MCF 10A (cell line): ENCODE measurements at regions of chr17 and their contacts with region 1.

Region 1: DNA sequence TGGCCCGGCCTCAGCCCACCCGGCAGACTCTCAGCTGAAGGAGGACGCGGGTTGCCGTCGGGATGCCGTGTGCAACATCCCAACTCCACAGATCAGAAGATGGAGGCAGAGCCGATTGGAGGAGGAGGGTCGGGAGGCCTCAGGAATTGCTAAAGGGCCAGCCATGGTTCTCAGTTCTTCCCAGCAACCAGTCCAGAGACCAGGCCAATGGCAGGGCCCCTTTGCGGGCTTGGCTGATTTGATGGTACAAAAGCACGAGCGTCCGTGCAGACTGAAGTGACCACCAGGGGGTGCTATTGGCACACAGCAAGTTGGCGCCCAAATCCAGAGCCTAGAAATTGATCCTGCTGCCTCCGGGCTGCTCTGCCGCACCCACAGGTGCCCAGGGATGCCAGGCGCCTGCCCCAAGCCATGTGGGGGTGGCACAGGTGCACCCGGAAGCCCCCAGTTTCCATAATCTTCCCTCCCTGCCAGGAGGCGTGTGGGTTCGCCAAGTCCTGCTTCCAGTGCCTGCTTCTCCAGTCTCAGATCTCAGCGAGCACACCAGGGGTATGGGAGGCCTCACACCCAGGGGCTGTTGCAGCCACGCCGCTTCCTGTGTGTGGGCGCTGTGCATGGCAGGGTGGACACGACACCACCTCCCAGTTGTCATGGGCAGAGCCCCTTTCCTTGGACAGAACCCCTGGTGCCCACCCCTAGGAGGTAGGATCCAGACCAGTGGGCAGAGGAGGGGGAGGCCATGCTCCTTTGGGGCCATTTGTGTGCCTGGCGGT is 7.1 kb upstream of the TEX19 start:
- DNase-seq: peak; percentile 86
- H3K4me3 Mint-ChIP-seq: no peak overlapping the region
- H3K27ac Mint-ChIP-seq: no peak overlapping the region
- H3K4me1 Mint-ChIP-seq: peaks cover 15% of the 10 kb centered on the region
- H3K27me3 Mint-ChIP-seq: peaks cover 11% of the 10 kb centered on the region
- CTCF ChIP-seq: peak; percentile 94

Region 2: GRCh38 chr17:81599719-81600486 is 752.0 kb before region 1 on chr17:
- CTCF ChIA-PET with region 1: no interaction called
- POLR2A ChIA-PET with region 1: no interaction called
- intact Hi-C with region 1: no loop called
- DNase-seq: no peak
- H3K4me3 Mint-ChIP-seq: no peak overlapping the region
- H3K27ac Mint-ChIP-seq: no peak overlapping the region
- H3K4me1 Mint-ChIP-seq: no peaks in the 10 kb centered on the region
- H3K27me3 Mint-ChIP-seq: no peaks in the 10 kb centered on the region
- CTCF ChIP-seq: no peak

Region 3: GRCh38 chr17:82338858-82339633 is 12.9 kb before region 1 on chr17:
- CTCF ChIA-PET with region 1: interaction called, 14 read pairs
- POLR2A ChIA-PET with region 1: interaction called, 4 read pairs
- intact Hi-C with region 1: no loop called
- DNase-seq: peak; percentile 87
- H3K4me3 Mint-ChIP-seq: peak overlapping the region; percentile 63
- H3K27ac Mint-ChIP-seq: peak overlapping the region; percentile 93
- H3K4me1 Mint-ChIP-seq: peaks cover 23% of the 10 kb centered on the region
- H3K27me3 Mint-ChIP-seq: no peaks in the 10 kb centered on the region
- CTCF ChIP-seq: no peak

Region 4: DNA sequence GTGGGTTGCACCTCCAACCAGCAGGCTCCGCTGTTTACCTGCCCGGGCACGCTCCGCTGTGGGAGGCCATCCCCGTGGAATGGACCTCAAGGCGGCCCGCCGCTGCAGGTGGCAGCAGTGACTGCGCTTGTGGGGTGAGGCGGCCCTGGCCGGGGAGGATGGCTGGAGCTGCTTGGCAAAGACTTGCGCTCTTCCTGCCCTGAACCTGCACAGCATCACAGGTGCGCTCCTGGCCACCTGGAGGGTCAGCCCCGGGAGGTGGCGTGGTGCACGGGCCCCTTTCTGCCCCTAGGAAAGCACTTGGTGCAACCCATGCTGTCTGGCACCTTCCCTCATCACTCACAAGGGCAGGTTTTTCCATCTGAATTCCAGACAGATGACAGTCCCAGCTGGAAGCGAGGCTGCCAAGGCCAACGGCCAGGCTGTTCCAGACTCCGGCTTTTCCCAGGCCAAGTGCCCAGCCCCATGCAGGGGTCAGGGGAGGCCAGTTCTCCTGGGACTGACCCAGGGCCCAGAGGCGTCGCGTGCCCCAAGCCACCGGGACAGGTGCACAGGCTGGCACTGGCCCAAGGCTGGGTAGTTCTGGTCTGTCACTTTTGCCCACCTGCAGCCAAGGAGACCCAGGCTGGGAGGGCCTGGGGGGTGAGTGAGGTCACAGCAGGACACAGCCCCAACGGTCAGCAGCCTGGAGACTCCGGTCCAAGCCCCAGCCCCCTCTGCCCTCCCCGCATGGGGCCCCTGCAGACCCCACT is 33.0 kb after region 1 on chr17:
- CTCF ChIA-PET with region 1: interaction called, 4 read pairs
- POLR2A ChIA-PET with region 1: interaction called, 11 read pairs
- intact Hi-C with region 1: no loop called
- DNase-seq: peak; percentile 73
- H3K4me3 Mint-ChIP-seq: no peak overlapping the region
- H3K27ac Mint-ChIP-seq: no peak overlapping the region
- H3K4me1 Mint-ChIP-seq: peaks cover 15% of the 10 kb centered on the region
- H3K27me3 Mint-ChIP-seq: peaks cover 30% of the 10 kb centered on the region
- CTCF ChIP-seq: peak; percentile 28

Region 5: DNA sequence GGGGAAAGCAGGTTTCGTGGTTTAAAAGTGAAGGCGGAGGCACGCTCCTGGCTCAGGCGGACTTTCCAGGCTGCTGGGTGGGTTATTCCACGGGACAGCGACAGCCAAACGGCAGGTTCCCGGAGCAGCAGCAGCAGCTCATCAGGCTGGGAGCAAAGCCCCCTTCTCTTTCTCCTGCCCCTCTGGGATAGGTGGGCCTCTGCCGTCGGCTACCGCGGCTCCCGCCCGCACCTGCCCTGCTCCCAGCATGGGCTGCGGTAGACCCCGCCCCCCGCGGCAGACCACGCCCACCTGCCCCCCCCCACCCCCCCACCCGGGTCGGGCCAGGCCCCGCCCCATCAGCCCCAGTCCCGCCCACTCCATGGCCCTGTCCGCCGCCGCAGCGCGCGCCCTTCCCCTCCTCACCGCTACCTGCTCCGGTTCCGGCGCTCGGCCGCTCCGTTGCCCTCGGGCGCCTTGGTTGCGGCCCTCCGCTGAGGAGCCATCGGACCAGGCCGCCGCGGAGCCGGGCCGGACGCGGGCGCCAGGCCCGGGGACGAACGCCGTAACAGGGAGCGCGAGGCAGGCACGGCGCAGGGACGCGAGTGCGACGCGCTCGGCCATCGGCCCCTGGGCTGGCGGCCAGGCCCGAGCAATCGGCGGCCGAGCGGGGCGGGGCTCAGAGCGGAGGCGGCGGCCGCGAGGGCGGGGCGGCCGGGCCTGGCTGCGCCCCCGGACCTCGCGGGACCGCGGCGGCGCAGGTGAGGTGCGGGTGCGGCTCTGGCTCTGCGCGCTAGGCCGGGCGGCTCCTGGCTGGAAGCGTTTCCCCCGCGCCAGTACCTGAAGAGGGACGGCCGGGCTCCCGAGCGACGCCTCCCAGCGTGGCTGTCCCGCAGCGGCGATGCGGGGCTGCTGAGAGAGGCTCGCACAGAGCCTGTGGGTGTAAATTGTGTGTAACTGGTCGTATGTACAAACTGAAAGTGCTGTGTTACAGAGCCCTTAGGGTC is 66.4 kb after region 1 on chr17 and contains the starts of genes HEXD and OGFOD3:
- CTCF ChIA-PET with region 1: interaction called, 4 read pairs
- POLR2A ChIA-PET with region 1: interaction called, 3 read pairs
- intact Hi-C with region 1: loop called (anchors 2 kb)
- DNase-seq: peak; percentile 78
- H3K4me3 Mint-ChIP-seq: peak within 1 kb of the TSS; percentile 71
- H3K27ac Mint-ChIP-seq: no peak within 1 kb of the TSS
- H3K4me1 Mint-ChIP-seq: no peaks in the 10 kb centered on the region
- H3K27me3 Mint-ChIP-seq: no peaks in the 10 kb centered on the region
- CTCF ChIP-seq: no peak
- total RNA-seq, gene HEXD: 14.8 and 16.2 TPM in 2 replicates
- total RNA-seq, gene OGFOD3: 16.5 and 21.1 TPM in 2 replicates

Region 6: GRCh38 chr17:82494236-82495055 is 142.5 kb after region 1 on chr17:
- CTCF ChIA-PET with region 1: interaction called, 5 read pairs
- POLR2A ChIA-PET with region 1: no interaction called
- intact Hi-C with region 1: loop called (anchors 1 kb)
- DNase-seq: peak; percentile 96
- H3K4me3 Mint-ChIP-seq: no peak overlapping the region
- H3K27ac Mint-ChIP-seq: peak overlapping the region; percentile 87
- H3K4me1 Mint-ChIP-seq: peaks cover 39% of the 10 kb centered on the region
- H3K27me3 Mint-ChIP-seq: no peaks in the 10 kb centered on the region
- CTCF ChIP-seq: peak; percentile 98

Region 7: GRCh38 chr17:82551779-82552457 is 200.0 kb after region 1 on chr17:
- CTCF ChIA-PET with region 1: interaction called, 9 read pairs
- POLR2A ChIA-PET with region 1: no interaction called
- intact Hi-C with region 1: loop called (anchors 1 kb)
- DNase-seq: peak; percentile 79
- H3K4me3 Mint-ChIP-seq: no peak overlapping the region
- H3K27ac Mint-ChIP-seq: peak overlapping the region; percentile 72
- H3K4me1 Mint-ChIP-seq: peaks cover 23% of the 10 kb centered on the region
- H3K27me3 Mint-ChIP-seq: no peaks in the 10 kb centered on the region
- CTCF ChIP-seq: peak; percentile 74

Region 8: DNA sequence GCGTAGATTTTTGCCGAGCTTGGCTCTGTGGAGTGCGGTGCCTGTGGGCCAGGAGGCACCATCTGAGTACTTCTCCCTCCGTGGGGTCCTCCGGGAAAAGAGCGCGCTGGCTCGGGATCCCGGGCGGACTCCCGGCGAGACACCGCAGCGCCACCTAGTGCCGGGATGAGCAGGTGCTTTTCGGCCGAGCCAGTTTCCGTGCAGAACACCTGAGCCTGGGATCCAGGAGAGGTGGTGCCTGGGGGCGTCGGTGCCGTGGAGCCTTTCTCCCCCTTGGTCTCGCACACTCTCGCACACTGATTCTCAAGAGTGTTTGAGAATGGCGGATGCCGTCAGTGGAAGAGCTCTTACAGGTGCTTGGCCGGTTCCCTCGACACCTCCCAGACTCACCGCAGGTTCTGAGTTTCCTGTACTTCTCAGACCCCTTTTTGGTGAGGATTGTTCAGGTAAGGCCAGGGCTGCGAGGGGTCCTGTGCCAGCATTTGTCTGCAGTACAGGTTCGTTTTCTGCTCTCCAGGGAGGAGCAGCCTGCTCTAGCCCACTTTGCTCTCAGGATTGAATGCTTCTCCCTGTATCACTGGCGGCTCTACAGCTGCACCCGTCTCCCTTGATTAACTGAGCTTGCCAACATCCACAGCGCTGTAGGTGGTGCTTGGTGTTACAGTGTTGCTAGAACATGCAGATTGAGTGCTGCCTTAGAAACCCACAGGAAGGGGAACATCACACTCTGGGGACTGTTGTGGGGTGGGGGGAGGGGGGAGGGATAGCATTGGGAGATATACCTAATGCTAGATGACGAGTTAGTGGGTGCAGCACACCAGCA is 423.3 kb after region 1 on chr17:
- CTCF ChIA-PET with region 1: interaction called, 3 read pairs
- POLR2A ChIA-PET with region 1: no interaction called
- intact Hi-C with region 1: loop called (anchors 2 kb)
- DNase-seq: peak; percentile 50
- H3K4me3 Mint-ChIP-seq: no peak overlapping the region
- H3K27ac Mint-ChIP-seq: no peak overlapping the region
- H3K4me1 Mint-ChIP-seq: peaks cover 6% of the 10 kb centered on the region
- H3K27me3 Mint-ChIP-seq: no peaks in the 10 kb centered on the region
- CTCF ChIP-seq: peak; percentile 87